Thyroid gland (tissue), 4 donors: ENCODE measurements at regions of chr10 and their contacts with region 1.

Region 1: DNA sequence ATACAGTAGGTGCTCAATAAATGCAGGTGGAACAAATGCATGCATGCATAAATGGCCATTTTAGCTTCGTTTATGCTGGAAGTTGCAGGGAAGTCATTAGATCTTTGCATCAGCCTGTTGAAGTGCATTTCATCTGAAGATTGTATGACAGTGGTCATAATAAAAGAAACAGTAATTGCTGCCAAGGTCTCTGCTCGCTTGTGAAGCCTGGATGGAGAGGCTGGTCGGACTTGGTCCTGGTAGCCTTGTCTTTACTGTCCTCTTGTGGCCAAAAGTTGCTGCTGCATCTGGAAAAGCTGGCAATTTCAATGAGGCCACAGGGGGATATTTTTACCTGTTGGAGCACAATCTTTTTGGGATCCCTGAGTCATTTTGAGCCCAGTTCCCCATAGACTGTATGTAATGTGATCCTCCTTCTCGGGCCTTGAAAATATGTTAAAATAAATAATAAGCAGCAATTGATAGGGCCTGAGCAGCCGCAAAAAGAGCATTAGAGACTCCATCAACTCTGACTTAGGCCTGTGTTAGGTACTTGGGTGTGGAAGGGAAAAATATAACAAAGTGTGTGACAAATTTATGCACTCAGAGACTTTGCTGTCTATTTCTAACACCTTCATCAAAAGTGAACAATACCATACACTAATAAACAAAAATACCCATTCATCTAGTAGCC is 31.6 kb upstream of the HABP2 start:
- DNase-seq: peak; percentile 79
- H3K4me3 ChIP-seq: no peak overlapping the region
- H3K27ac ChIP-seq: no peak overlapping the region
- H3K4me1 ChIP-seq: peaks cover 3 to 9% of the 10 kb centered on the region in 2 donors
- H3K27me3 ChIP-seq: no peaks in the 10 kb centered on the region
- CTCF ChIP-seq: peak; percentile 98 to 100 (median 99)
- POLR2A ChIP-seq: no peak

Region 2: DNA sequence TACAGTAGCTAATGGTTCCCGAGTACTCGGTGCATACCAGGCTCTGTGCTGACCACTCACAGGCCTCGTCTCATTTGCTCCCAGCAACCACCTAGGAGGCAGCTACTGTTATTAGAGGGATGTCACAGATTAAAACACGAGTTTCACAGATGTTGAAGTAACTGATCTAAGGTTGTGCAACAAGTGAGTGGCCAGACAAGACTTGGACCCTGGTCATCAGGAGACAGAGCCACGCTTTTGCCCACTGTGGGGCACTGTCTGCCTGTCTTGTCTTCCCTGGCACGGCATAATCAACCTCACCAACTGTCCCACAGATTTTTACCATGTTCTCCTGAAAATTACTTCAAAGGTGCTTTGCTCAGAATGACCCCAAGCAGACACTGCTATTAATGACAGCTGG is 80.0 kb before region 1 on chr10:
- intact Hi-C with region 1: loop called (anchors 5 kb)
- DNase-seq: peak; percentile 31 to 58
- H3K4me3 ChIP-seq: no peak overlapping the region
- H3K27ac ChIP-seq: no peak overlapping the region
- H3K4me1 ChIP-seq: peaks cover 0 to 6% of the 10 kb centered on the region in 2 donors
- H3K27me3 ChIP-seq: no peaks in the 10 kb centered on the region
- CTCF ChIP-seq: peak in 4 of 6 experiments; percentile 46 to 66 (median 54)
- POLR2A ChIP-seq: no peak